Breast epithelium (tissue), 4 donors: ENCODE measurements at regions of chr11 and their contacts with region 1.

Region 1: DNA sequence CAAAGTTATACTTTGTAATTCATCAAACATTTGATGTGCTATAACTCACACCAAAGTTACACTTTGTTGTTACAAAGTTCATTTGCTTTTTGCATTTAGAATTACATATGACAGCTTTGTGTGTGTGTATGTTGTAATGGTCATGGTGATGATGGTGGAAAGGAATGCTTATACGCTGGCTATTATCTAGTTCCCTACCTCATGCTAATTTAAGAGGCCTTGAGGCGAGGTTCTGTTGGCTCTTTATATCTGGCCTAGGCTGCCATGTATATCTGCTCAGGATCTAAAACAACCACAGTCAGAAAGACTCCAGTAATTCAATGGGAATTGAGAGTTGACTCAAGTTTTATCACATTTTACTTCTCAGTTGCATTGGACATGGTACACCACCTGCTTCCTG is 123.4 kb downstream of the SLC17A6 start:
- DNase-seq: no peak
- H3K4me3 ChIP-seq: no peak overlapping the region
- H3K27ac ChIP-seq: no peak overlapping the region
- H3K4me1 ChIP-seq: no peaks in the 10 kb centered on the region
- H3K27me3 ChIP-seq: no peaks in the 10 kb centered on the region
- CTCF ChIP-seq: no peak
- POLR2A ChIP-seq: no peak

Region 2: GRCh38 chr11:22405377-22405776 is 56.2 kb before region 1 on chr11:
- intact Hi-C with region 1: loop called (anchors 2 kb)
- DNase-seq: no peak
- H3K4me3 ChIP-seq: no peak overlapping the region
- H3K27ac ChIP-seq: no peak overlapping the region
- H3K4me1 ChIP-seq: no peaks in the 10 kb centered on the region
- H3K27me3 ChIP-seq: no peaks in the 10 kb centered on the region
- CTCF ChIP-seq: no peak
- POLR2A ChIP-seq: no peak

Region 3: DNA sequence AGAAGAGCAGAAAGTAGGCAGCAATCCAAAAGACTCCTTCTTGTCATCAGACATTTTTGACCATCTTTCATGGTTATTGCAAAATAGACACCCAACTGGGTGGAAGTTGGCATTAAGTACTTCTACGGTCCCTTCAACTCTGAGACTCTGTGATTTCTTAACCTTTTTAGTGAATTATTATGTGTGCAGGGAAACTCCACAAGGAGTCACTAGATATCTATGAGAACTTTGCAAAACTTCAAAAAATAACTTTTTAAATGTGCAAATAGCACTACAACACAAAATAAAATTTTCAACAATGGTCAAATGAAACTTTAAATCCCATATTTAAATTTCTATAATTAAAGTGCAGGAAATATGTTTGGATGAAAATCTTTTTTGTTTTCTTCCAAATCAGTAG is 34.7 kb before region 1 on chr11:
- intact Hi-C with region 1: no loop called
- DNase-seq: no peak
- H3K4me3 ChIP-seq: no peak overlapping the region
- H3K27ac ChIP-seq: no peak overlapping the region
- H3K4me1 ChIP-seq: no peaks in the 10 kb centered on the region
- H3K27me3 ChIP-seq: peaks cover 0 to 8% of the 10 kb centered on the region in 2 donors
- CTCF ChIP-seq: peak in 1 of 3 donors; percentile 10
- POLR2A ChIP-seq: no peak